ENCODE measurements at regions of chr1 and their contacts with region 1.

Region 1: DNA sequence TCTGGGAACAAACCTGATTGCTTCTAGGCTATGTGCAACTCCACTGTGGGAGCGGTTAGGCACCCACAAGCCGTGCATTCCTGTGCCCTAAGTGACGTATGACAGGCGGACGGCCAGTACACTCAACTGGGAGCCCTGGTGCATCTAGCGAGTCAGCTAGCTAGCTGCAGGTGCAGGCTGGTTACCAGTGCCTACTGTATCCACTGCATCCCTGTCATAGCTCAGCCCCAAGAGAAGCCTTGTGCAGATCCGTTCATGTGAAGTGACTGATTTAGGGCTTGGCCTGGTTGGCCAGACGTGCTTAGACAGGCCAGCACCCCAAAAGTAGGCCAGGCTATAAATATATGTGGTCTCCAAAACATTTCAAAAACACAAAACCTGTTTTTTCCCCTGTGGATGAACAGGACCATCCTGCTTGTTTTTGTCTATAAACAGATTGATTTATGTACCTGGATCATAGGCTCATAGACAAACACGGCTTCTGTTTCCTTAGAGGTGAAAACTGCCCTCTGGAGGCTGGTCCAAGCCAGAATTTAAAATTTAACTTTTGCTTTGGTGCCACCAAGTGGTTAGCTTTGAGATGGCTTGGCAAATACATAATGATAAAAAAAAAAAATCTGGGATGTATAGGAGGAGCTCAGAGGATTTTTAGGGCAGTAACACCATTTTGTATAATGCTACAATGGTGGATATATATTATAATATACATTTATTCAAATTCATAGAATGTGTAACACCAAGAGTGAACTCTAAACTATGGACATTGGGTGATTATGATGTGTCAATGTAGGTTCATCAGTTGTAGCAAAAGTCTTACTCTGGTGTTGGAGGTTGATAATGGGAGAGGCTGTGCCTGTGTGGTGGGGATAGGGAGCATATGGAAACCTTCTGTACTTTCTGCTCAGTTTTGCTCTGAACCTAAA is 68.5 kb downstream of the GIPC2 start:
- DNase-seq: peak; percentile 37 to 83 (median 53)
- ATAC-seq: peak; percentile 93
- H3K4me3 ChIP-seq: no peak overlapping the region
- H3K27ac ChIP-seq: no peak overlapping the region
- H3K4me1 ChIP-seq: peaks cover 0 to 4% of the 10 kb centered on the region in 2 experiments; a peak in 3 of 5 replicates
- H3K27me3 ChIP-seq: no peaks in the 10 kb centered on the region
- CTCF ChIP-seq: peak; percentile 87 to 100 (median 99)
- EP300 ChIP-seq: no peak
- POLR2A ChIP-seq: no peak
- RAD21 ChIP-seq: peak; percentile 99 to 100

Region 2: DNA sequence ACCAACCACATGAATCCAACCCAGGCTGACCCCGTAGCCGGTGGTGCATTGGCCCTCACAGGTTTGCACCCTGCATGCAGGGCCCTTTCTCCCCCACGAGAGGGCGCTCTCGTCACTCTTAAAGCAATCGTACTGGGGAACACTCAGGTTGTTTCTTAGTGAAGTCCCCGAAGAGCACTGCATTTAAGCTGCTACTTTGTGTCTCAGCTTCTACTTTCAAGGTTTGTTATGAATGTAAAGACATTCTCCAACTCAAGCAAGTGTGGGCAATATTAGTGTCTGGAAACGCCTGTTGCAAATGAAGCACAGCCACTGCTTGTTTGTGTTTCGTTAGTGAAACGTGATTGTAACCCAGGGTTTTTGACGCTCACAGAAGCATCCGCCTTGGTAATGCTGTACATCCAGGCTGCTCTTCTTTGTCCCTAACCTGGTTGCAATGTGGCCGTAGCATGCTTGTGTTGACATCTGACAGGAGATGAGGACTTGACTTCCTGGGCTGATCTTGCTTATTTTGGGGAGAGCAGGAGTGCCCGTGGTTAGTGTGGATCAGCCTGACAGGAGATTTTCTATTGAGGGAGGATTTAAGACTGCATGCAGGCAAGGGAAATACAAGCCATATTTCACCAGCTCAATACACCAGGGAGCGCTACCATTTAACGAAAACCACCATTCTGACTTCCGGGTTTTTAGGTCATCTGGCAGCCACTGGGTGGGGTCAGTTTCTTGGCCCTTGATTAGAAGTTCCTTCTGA is 1959.9 kb before region 1 on chr1:
- CTCF ChIA-PET with region 1: interaction called, 10 read pairs
- POLR2A ChIA-PET with region 1: no interaction called
- in situ Hi-C with region 1: loop called (anchors 25 kb)
- intact Hi-C with region 1: loop called (anchors 10 kb)
- DNase-seq: peak; percentile 67 to 81 (median 78)
- ATAC-seq: peak; percentile 99
- H3K4me3 ChIP-seq: peak overlapping the region; percentile 12; the same call in 1 of the 2 replicates
- H3K27ac ChIP-seq: no peak overlapping the region
- H3K4me1 ChIP-seq: no peaks in the 10 kb centered on the region; a peak in 1 of 5 replicates
- H3K27me3 ChIP-seq: no peaks in the 10 kb centered on the region
- CTCF ChIP-seq: peak; percentile 79 to 94 (median 88)
- EP300 ChIP-seq: no peak
- POLR2A ChIP-seq: no peak
- RAD21 ChIP-seq: peak; percentile 78 to 88

Region 3: GRCh38 chr1:77170687-77171086 is 943.6 kb before region 1 on chr1:
- CTCF ChIA-PET with region 1: no interaction called
- POLR2A ChIA-PET with region 1: no interaction called
- in situ Hi-C with region 1: loop called (anchors 25 kb)
- intact Hi-C with region 1: no loop called
- DNase-seq: no peak
- ATAC-seq: no peak
- H3K4me3 ChIP-seq: no peak overlapping the region
- H3K27ac ChIP-seq: no peak overlapping the region
- H3K4me1 ChIP-seq: no peaks in the 10 kb centered on the region
- H3K27me3 ChIP-seq: no peaks in the 10 kb centered on the region
- CTCF ChIP-seq: no peak
- EP300 ChIP-seq: no peak
- POLR2A ChIP-seq: no peak
- RAD21 ChIP-seq: no peak

Region 4: DNA sequence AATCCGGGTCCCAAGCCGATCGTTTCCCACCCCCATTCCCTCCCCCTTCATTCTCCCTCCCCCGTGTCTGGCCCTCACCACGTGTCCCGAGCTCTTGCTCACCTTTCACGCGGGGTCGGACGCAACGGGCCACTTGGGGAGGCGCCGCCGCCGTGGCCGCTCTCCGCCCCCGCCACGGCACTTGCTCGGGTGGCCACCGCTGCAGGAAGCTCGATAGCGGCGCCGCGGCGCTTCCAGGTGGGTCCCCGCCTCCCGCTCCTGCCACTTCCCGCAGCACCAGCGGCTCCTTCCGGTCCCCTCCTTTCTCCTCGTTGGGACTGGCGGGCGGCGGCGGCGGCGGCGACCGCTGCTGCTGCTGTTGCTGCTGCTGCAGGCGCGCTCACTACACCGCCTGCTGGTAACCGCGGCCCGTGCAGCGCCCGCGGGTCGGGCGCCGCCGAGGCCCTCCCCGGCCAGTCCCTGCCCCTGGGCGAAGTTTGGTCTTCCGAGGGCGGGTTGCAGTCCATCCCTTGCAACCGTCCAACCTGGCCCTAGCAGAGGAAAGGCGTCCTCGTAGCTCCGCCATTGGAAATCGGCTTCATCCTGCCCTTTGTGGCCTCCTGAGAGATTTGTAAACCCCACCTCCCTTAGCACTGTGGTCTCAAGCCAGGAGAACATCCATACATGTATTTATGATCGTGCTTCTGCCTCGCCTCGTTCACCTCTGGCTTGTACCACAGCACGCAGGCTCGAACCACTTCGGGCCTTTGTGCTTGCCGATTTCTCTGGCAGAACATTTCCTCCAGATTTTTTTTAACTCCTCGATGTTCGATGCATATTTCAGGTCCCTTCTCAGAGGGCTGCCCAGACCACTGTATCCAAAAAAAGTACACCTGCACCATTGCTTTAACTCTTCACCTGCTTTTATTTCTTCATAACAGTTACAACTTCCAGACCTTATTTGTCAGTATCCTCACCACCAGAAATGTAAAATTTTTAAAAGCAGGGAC is 430.8 kb before region 1 on chr1:
- CTCF ChIA-PET with region 1: no interaction called
- POLR2A ChIA-PET with region 1: no interaction called
- in situ Hi-C with region 1: no loop called
- intact Hi-C with region 1: loop called (anchors 1 kb)
- DNase-seq: peak; percentile 88 to 94 (median 90)
- ATAC-seq: peak; percentile 80
- H3K4me3 ChIP-seq: peak overlapping the region; percentile 66
- H3K27ac ChIP-seq: peak overlapping the region; percentile 96
- H3K4me1 ChIP-seq: peaks cover 5 to 7% of the 10 kb centered on the region in 2 experiments
- H3K27me3 ChIP-seq: no peaks in the 10 kb centered on the region
- CTCF ChIP-seq: peak; percentile 83 to 94 (median 85)
- EP300 ChIP-seq: no peak; the same call in 1 of the 2 replicates
- POLR2A ChIP-seq: peak; percentile 83
- RAD21 ChIP-seq: peak; percentile 76 to 80

Region 5: GRCh38 chr1:77866296-77866695 is 248.0 kb before region 1 on chr1:
- CTCF ChIA-PET with region 1: no interaction called
- POLR2A ChIA-PET with region 1: no interaction called
- in situ Hi-C with region 1: no loop called
- intact Hi-C with region 1: no loop called
- DNase-seq: no peak
- ATAC-seq: no peak
- H3K4me3 ChIP-seq: no peak overlapping the region
- H3K27ac ChIP-seq: no peak overlapping the region
- H3K4me1 ChIP-seq: no peaks in the 10 kb centered on the region
- H3K27me3 ChIP-seq: no peaks in the 10 kb centered on the region
- CTCF ChIP-seq: no peak
- EP300 ChIP-seq: no peak
- POLR2A ChIP-seq: no peak
- RAD21 ChIP-seq: no peak

Region 6: GRCh38 chr1:77900687-77901293 is 213.5 kb before region 1 on chr1:
- CTCF ChIA-PET with region 1: interaction called, 3 read pairs
- POLR2A ChIA-PET with region 1: no interaction called
- in situ Hi-C with region 1: no loop called
- intact Hi-C with region 1: loop called (anchors 5 kb)
- DNase-seq: peak; percentile 11 to 60 (median 24)
- ATAC-seq: peak; percentile 90
- H3K4me3 ChIP-seq: no peak overlapping the region
- H3K27ac ChIP-seq: no peak overlapping the region
- H3K4me1 ChIP-seq: no peaks in the 10 kb centered on the region
- H3K27me3 ChIP-seq: no peaks in the 10 kb centered on the region
- CTCF ChIP-seq: peak; percentile 63 to 79 (median 74)
- EP300 ChIP-seq: no peak
- POLR2A ChIP-seq: no peak
- RAD21 ChIP-seq: peak; percentile 64 to 91

Measured in K562 (cell line).